ENCODE measurements at regions of chr13 and their contacts with region 1.

Region 1: DNA sequence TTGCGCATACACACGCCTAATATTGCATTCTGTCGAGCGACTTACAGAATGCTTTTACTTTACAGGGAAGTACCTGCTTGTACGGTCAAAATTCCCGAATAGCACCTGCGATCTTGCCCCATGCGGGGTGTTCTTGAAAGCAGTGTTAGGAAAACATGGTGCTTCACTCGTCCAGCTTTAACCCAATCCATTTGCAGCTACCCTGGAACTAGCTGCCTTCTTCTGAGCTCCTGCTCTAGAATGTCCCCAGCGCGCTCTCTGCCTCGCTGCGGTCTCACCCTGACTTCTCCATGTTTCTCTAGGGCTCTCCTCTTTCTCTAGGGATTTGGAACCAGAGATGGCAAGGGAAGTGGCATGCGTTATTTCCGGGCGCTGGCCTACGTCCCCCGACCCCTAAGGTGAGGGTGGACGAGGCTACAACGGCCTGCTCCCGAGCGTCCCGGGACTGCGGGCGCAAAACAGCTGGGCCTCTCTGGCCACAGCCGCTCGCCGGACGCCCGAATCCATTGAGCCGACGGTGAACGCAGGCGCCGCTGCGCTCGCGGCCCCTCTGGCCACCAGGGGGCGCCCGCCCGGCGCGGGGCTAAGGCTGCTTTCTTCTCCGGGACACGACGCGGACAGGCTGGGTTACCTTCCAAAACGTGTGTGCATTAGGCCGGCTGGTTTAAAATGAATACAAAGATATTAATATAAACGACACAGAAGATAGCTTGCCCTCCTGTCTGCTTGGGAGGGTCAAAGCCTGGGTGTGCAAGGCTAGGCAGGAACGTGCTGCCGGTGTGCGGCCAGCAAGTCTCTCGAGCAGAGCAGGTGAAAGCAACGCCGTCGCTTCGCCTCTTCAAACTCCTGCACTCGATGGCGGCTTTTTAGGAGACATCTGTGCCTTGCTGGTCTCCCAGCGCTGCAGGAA is 1.8 kb upstream of the SPRY2 start:
- DNase-seq: peak; percentile 82 to 95
- H3K4me3 ChIP-seq: peak overlapping the region; percentile 84
- H3K4me3 Mint-ChIP-seq: no peak overlapping the region
- H3K27ac Mint-ChIP-seq: peak overlapping the region; percentile 91
- H3K4me1 ChIP-seq: peaks cover 21% of the 10 kb centered on the region
- H3K4me1 Mint-ChIP-seq: peaks cover 7% of the 10 kb centered on the region
- H3K27me3 ChIP-seq: no peaks in the 10 kb centered on the region
- H3K27me3 Mint-ChIP-seq: no peaks in the 10 kb centered on the region
- CTCF ChIP-seq: peak; percentile 87 to 97

Region 2: GRCh38 chr13:79861731-79862130 is 481.0 kb before region 1 on chr13:
- CTCF ChIA-PET with region 1: no interaction called
- POLR2A ChIA-PET with region 1: no interaction called
- intact Hi-C with region 1: loop called (anchors 2 kb)
- DNase-seq: peak; percentile 90 to 95
- H3K4me3 ChIP-seq: no peak overlapping the region
- H3K4me3 Mint-ChIP-seq: peak overlapping the region; percentile 65
- H3K27ac Mint-ChIP-seq: peak overlapping the region; percentile 69
- H3K4me1 ChIP-seq: peaks cover 37% of the 10 kb centered on the region
- H3K4me1 Mint-ChIP-seq: peaks cover 45% of the 10 kb centered on the region
- H3K27me3 ChIP-seq: no peaks in the 10 kb centered on the region
- H3K27me3 Mint-ChIP-seq: no peaks in the 10 kb centered on the region
- CTCF ChIP-seq: no peak

Region 3: DNA sequence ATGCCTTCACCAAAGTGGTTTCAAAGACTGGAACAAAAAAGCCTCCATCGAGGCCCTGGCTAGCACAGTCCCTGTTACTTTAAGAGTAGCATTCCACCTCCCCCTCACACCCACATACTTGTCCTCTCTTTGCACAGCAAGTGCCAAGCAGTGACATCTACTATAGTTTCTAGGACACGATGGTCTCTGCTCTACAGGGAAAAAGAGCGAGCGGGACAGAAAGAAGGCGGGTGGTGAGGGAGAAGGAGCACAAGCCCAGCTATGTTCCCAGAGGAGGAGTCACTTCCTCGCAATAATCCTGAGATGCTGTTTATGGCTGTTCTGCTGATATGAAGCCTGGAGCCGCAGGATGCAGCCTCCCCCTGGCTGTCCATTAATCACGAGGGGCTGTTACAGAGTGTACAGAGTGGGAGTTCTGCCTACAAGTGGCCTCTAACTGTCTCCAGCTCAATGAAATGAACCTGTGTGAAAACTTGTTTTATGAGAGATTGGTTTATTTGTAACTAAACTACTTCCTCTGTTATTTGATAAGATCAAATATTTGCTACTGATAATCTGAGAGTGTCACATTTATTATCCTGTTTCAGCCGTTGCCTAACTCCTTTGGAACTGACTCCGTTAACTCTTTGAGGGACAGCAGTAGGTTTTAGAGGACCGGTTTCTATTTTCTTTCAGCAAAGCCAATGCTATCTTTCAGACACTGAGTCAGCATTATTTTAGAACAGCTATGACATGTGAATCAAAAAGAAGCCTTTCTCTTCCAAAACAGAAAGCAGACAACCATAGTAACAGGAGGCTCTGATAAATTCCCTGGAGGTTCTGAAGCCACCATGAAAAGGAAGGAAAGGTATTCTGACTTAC is 209.8 kb before region 1 on chr13:
- CTCF ChIA-PET with region 1: interaction called, 5 read pairs
- POLR2A ChIA-PET with region 1: interaction called, 7 read pairs
- intact Hi-C with region 1: loop called (anchors 1 kb)
- DNase-seq: peak; percentile 87 to 96
- H3K4me3 ChIP-seq: 0 out of 2 replicates have a peak overlapping the region, but pooled peaks have one; percentile 13
- H3K4me3 Mint-ChIP-seq: peak overlapping the region; percentile 74
- H3K27ac Mint-ChIP-seq: peak overlapping the region; percentile 91
- H3K4me1 ChIP-seq: peaks cover 28% of the 10 kb centered on the region
- H3K4me1 Mint-ChIP-seq: peaks cover 24% of the 10 kb centered on the region
- H3K27me3 ChIP-seq: no peaks in the 10 kb centered on the region
- H3K27me3 Mint-ChIP-seq: peaks cover 2% of the 10 kb centered on the region
- CTCF ChIP-seq: no peak

Region 4: DNA sequence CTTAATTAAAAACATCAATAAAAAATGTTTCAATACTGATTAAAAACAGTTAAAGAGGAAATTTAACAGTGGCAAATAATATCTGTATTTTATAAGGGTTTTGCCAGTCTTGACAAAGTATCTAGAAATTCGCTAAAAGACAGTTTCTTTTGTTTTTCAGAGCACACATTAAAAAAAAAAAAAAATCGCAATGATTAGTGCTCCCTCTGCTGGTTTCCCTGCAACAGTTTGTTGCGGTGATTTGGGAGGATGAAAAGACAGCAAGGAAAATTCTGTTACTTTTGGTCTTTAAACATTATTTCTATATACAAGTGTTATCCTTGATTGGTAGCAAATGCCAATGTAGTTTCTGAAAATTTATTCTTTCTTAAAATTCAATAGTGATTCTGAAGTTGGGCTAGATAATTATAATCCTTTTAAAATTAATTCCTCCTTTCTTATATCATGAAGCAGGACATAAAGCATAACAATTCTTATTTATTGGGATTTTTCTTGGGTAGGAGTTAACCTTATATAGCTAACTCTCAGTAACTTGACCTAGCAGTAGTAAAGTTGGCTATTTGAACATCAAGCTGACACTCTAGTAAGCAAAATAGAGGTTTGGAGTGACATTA is 21.3 kb after region 1 on chr13:
- CTCF ChIA-PET with region 1: interaction called, 6 read pairs
- POLR2A ChIA-PET with region 1: no interaction called
- intact Hi-C with region 1: loop called (anchors 1 kb)
- DNase-seq: peak in 1 of 2 experiments; percentile 39
- H3K4me3 ChIP-seq: no peak overlapping the region
- H3K4me3 Mint-ChIP-seq: no peak overlapping the region
- H3K27ac Mint-ChIP-seq: no peak overlapping the region
- H3K4me1 ChIP-seq: peaks cover 26% of the 10 kb centered on the region
- H3K4me1 Mint-ChIP-seq: peaks cover 16% of the 10 kb centered on the region
- H3K27me3 ChIP-seq: no peaks in the 10 kb centered on the region
- H3K27me3 Mint-ChIP-seq: no peaks in the 10 kb centered on the region
- CTCF ChIP-seq: peak; percentile 83 to 85

Region 5: DNA sequence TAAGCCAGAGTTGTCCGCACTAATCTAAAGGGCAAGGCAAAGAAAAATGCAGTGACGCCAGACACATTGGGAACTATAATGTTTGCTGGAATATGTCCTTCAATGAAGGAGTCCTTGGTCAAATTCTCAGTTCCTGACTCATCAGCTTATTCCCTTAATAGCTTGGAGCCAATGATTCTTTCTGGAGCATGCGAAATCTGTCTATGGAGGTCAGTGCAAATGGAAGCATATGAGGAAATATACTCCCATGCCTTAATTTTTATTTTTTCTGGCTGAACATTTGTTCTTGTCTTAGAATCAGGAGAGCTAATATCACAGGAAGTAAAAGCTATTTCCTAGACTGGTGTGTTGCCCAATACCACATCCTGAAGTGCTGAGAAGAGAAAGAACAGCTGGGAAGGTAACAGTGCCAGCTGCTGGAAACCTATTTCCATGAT is 288.0 kb after region 1 on chr13:
- CTCF ChIA-PET with region 1: no interaction called
- POLR2A ChIA-PET with region 1: no interaction called
- intact Hi-C with region 1: no loop called
- DNase-seq: no peak
- H3K4me3 ChIP-seq: no peak overlapping the region
- H3K4me3 Mint-ChIP-seq: no peak overlapping the region
- H3K27ac Mint-ChIP-seq: no peak overlapping the region
- H3K4me1 ChIP-seq: no peaks in the 10 kb centered on the region
- H3K4me1 Mint-ChIP-seq: no peaks in the 10 kb centered on the region
- H3K27me3 ChIP-seq: no peaks in the 10 kb centered on the region
- H3K27me3 Mint-ChIP-seq: peaks cover 5% of the 10 kb centered on the region
- CTCF ChIP-seq: no peak

Measured in Caco-2 (cell line).